ENCODE measurements at regions of chr19 and their contacts with region 1.

Region 1: DNA sequence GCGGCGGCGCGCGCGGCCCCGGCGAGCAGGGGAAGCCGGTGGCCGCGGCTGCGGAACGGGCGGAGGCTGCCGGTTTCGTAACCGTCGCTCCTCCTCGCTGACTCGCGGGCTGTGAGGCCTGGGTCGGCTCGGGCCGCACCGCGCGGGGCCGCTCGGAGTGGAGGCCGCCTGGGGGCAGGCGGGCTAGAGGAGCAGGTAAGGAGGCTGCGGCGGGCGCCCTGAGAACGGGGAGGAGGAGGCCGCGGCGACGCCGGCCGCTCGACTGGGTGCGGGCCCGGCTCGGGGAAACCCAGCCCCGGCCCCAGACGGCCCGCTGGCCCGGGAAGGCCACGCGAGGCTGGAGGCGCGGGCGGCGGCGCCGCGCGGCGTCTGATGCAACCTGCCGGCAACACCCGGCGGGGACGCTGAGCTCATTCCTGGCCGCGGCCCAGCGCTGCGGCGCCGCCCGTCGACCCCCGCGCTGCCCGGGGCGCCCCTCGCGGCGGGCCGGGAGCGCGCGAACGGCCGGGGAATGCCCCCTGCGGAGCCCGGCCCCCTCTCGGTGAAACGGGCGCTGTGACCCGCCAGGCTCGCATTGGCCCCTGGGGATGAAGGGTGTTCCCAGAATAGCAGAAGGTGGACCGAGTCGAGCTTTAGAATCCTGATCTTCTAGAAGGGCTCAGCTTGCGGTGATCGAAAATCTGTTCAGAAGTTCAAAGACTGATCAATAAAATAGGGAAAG is at the start of gene CEBPG:
- DNase-seq: peak in 2 of 9 donors; percentile 57 to 68
- ATAC-seq: peak; percentile 52
- H3K4me3 ChIP-seq: peak within 1 kb of the TSS; percentile 93
- H3K4me3 Mint-ChIP-seq: peak within 1 kb of the TSS; percentile 87 to 95 (median 92)
- H3K27ac ChIP-seq: peak within 1 kb of the TSS; percentile 98
- H3K27ac Mint-ChIP-seq: peak within 1 kb of the TSS; percentile 73 to 97 (median 85)
- H3K4me1 ChIP-seq: peaks cover 16 to 19% of the 10 kb centered on the region in 2 donors
- H3K4me1 Mint-ChIP-seq: peaks cover 36 to 52% (median 48%) of the 10 kb centered on the region in 7 donors
- H3K27me3 ChIP-seq: no peaks in the 10 kb centered on the region
- H3K27me3 Mint-ChIP-seq: peaks cover 0 to 3% (median 0%) of the 10 kb centered on the region in 5 donors
- total RNA-seq, gene CEBPG: 17.1 to 22.4 (median 21.1) TPM

Region 2: DNA sequence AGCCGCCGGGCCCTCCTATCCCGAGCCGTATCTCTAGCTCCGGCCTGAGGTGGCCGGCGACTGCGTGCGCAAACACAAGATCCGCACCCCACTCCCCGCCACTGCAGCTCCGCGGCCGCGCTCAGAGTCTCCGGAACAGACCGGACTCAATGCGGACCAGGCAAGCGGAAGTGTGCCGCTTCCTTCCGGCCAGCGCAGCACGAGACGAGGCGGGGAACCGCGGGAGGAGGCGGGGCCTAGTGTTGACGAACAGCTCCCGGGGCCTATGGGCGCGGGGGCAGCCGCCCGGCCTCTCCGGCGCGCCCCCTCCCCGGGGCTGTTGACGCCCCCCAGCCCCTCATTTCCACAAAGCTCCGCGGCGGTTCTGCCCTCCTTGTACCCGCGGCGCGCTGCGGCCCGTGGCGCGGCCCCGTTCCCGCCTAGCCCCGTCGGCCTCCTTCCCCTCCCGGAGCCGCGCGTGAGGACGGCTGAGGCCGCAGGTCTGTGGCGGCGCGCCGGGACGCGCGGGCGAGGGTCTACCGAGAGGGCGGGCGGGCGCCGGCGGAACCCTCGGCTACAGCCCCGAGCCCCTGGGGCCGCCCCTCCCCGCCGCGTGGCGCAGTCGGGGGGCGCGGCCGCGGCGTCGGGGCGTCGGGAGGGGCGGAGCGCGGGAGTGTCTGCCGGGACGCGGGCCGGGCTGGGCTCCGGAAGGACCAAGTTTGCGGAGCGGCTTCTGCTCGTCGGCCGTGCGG is 968.3 kb before region 1 on chr19 and contains the start of gene DPY19L3:
- CTCF ChIA-PET with region 1: no interaction called
- POLR2A ChIA-PET with region 1: no interaction called
- intact Hi-C with region 1: loop called in 1 of 2 experiments (anchors 2 kb)
- DNase-seq: peak; percentile 74 to 96 (median 82)
- ATAC-seq: peak; percentile 95
- H3K4me3 ChIP-seq: peak within 1 kb of the TSS; percentile 85
- H3K4me3 Mint-ChIP-seq: peak within 1 kb of the TSS; percentile 83 to 93 (median 88)
- H3K27ac ChIP-seq: peak within 1 kb of the TSS; percentile 90
- H3K27ac Mint-ChIP-seq: peak within 1 kb of the TSS; percentile 86 to 91 (median 89)
- H3K4me1 ChIP-seq: peaks cover 4 to 12% of the 10 kb centered on the region in 2 donors
- H3K4me1 Mint-ChIP-seq: peaks cover 8 to 34% (median 17%) of the 10 kb centered on the region in 7 donors
- H3K27me3 ChIP-seq: no peaks in the 10 kb centered on the region
- H3K27me3 Mint-ChIP-seq: no peaks in the 10 kb centered on the region
- total RNA-seq, gene DPY19L3: 8.4 to 19.3 (median 15.8) TPM

Region 3: DNA sequence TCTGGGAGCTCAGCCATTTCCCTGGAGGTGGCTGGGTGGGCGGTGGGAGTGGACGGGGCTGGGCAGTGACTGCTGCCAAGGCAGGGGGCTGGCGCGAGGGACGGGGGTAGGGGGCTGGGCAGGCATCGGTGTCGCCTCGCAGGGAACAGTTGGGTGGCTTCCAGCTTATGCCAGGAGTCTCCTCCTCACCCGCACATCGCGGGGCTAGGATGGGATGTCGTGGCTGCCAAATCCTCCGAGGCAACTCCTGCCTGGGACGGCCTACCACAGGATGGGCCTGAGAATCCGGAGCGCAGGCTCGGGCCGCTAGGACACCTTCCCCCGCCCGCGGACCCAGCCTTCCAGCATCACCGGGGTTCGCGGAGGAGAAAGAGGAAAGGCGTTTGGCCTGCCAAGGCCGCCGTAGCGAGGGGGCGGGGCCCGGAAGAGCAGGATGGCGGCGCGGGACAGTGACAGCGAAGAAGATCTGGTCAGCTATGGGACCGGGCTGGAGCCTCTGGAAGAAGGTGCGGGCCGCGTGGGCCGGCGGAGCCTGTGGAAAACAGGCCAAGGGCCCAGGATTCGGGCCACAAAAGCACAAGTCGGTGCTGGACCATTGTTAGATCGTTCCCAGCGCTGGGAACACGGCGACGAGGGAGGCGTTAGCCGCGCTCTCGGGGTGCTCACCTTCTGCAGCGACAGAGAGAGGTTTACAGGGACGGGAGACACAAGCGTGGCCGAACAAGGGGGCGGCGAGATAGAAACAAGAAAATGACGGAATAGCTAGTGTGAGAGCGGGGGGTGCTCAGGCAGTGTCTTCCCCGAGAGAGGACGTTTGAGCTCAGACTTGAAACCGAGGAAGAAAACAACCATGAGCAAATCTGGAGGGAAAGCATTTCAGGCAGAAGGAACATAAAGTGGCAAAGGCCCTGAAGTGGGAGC is 292.8 kb before region 1 on chr19 and contains the start of gene GPATCH1:
- CTCF ChIA-PET with region 1: no interaction called
- POLR2A ChIA-PET with region 1: no interaction called
- intact Hi-C with region 1: loop called in 1 of 2 experiments (anchors 10 kb)
- DNase-seq: peak; percentile 79 to 92 (median 85)
- ATAC-seq: peak; percentile 99
- H3K4me3 ChIP-seq: peak within 1 kb of the TSS; percentile 98
- H3K4me3 Mint-ChIP-seq: peak within 1 kb of the TSS; percentile 92 to 99 (median 94)
- H3K27ac ChIP-seq: peak within 1 kb of the TSS; percentile 84
- H3K27ac Mint-ChIP-seq: peak within 1 kb of the TSS; percentile 89 to 99 (median 94)
- H3K4me1 ChIP-seq: peaks cover 10 to 11% of the 10 kb centered on the region in 2 donors
- H3K4me1 Mint-ChIP-seq: peaks cover 20 to 39% (median 30%) of the 10 kb centered on the region in 7 donors
- H3K27me3 ChIP-seq: no peaks in the 10 kb centered on the region
- H3K27me3 Mint-ChIP-seq: no peaks in the 10 kb centered on the region
- total RNA-seq, gene GPATCH1: 11.2 to 20.0 (median 14.4) TPM

Region 4: DNA sequence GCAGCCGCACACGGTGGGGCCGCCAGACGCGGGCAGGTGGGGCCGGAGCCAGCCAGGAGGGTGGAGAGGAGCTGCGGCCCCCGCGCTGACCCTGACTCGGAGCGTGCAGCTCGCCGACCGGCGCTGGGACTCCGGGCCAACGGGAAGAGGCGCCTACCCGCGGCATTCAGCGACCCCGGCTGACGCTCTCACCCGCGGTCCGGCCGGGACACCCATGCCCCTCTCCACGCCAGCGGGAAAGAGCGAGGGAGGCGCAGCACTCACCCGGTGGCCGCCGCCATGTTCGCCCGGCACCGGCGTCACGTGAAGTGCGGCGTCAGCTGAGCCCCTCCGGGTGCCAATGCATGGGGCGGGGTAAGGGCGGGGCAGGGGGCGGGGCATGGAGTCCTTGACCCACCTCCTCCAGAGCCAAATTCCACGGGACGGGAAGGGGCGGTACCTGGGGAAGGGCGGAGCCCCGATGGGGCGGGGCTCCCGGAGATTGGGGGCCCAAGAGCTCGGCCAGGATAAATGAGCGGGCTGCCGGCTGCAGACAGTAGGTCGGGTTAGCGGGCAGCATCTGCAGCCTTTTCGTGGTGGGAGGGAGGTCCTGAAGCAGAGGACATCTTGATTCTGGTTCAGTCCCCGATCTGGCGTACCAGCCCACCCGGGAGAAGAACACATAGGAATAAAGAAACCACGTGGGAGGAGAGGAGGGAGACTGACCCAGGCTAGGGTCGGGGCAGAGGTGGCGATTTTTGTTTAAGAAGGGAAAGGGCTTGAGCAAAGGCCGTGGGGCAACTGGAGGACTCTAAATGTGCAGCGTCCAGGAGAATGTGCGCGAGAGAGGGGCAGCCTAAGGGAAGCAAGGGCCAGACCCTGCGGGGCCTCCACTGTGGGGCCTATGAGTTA is 147.9 kb after region 1 on chr19 and contains the start of gene PEPD:
- CTCF ChIA-PET with region 1: no interaction called
- POLR2A ChIA-PET with region 1: no interaction called
- intact Hi-C with region 1: loop called (anchors 1 to 5 kb)
- DNase-seq: peak; percentile 53 to 82 (median 62)
- ATAC-seq: peak; percentile 95
- H3K4me3 ChIP-seq: peak within 1 kb of the TSS; percentile 82
- H3K4me3 Mint-ChIP-seq: peak within 1 kb of the TSS; percentile 75 to 91 (median 88)
- H3K27ac ChIP-seq: peak within 1 kb of the TSS; percentile 65
- H3K27ac Mint-ChIP-seq: peak within 1 kb of the TSS; percentile 69 to 95 (median 83)
- H3K4me1 ChIP-seq: peaks cover 13 to 14% of the 10 kb centered on the region in 2 donors
- H3K4me1 Mint-ChIP-seq: peaks cover 17 to 29% (median 25%) of the 10 kb centered on the region in 7 donors
- H3K27me3 ChIP-seq: no peaks in the 10 kb centered on the region
- H3K27me3 Mint-ChIP-seq: peaks cover 0 to 10% (median 0%) of the 10 kb centered on the region in 5 donors
- total RNA-seq, gene PEPD: 21.9 to 35.6 (median 24.5) TPM

Region 5: GRCh38 chr19:33849551-33850147 is 475.8 kb after region 1 on chr19:
- CTCF ChIA-PET with region 1: no interaction called
- POLR2A ChIA-PET with region 1: no interaction called
- intact Hi-C with region 1: no loop called
- DNase-seq: no peak
- ATAC-seq: no peak
- H3K4me3 ChIP-seq: no peak overlapping the region
- H3K4me3 Mint-ChIP-seq: no peak overlapping the region
- H3K27ac ChIP-seq: no peak overlapping the region
- H3K27ac Mint-ChIP-seq: no peak overlapping the region
- H3K4me1 ChIP-seq: no peaks in the 10 kb centered on the region
- H3K4me1 Mint-ChIP-seq: no peaks in the 10 kb centered on the region
- H3K27me3 ChIP-seq: no peaks in the 10 kb centered on the region
- H3K27me3 Mint-ChIP-seq: peaks cover 10 to 45% (median 42%) of the 10 kb centered on the region in 5 donors

Region 6: DNA sequence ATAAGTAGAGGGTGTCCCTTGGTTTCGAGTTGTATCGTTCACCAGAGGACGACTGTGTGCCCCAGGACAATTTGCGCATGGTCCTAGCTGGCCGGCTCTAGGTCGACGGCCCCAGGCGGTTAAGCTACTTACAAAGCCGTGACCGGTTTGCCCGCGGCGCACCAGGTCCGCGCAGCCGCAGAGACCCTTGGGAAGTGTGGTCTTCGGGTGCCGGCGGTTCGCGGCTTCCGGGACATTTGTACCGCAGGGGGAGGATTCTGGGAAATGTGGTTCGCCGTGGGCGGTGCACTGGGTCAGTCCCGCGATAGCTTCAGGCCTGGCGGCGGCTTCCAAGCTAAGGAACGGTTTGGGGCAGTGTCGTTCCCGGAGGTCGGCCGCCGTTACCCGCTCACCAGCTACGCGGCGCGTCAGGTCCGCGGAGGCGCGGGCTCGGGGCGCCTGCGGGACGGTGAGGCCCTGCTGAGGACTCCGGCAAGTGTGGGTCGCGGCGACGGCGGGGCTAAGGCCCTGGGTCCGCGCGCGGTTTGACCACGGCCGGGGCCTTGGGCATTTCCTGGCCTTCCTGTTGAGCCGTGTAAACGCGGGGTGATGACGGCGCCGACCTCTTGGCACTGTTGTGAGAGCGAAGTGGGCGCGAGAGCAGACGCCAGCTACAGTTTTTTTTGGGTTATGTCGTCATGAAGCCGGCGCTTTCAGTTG is 1303.7 kb after region 1 on chr19 and contains the start of gene ZNF302:
- CTCF ChIA-PET with region 1: no interaction called
- POLR2A ChIA-PET with region 1: no interaction called
- intact Hi-C with region 1: loop called in 1 of 2 experiments (anchors 5 kb)
- DNase-seq: peak; percentile 87 to 96 (median 94)
- ATAC-seq: peak; percentile 95
- H3K4me3 ChIP-seq: peak within 1 kb of the TSS; percentile 93
- H3K4me3 Mint-ChIP-seq: peak within 1 kb of the TSS; percentile 92 to 99 (median 96)
- H3K27ac ChIP-seq: peak within 1 kb of the TSS; percentile 80
- H3K27ac Mint-ChIP-seq: peak within 1 kb of the TSS; percentile 94 to 100 (median 99)
- H3K4me1 ChIP-seq: peaks cover 14 to 15% of the 10 kb centered on the region in 2 donors
- H3K4me1 Mint-ChIP-seq: peaks cover 20 to 56% (median 35%) of the 10 kb centered on the region in 7 donors
- H3K27me3 ChIP-seq: no peaks in the 10 kb centered on the region
- H3K27me3 Mint-ChIP-seq: peaks cover 9 to 18% (median 12%) of the 10 kb centered on the region in 5 donors
- total RNA-seq, gene ZNF302: 13.6 to 61.4 (median 25.7) TPM